GM18951 (cell line): ENCODE measurements at regions of chr17 and their contacts with region 1.

Region 1: DNA sequence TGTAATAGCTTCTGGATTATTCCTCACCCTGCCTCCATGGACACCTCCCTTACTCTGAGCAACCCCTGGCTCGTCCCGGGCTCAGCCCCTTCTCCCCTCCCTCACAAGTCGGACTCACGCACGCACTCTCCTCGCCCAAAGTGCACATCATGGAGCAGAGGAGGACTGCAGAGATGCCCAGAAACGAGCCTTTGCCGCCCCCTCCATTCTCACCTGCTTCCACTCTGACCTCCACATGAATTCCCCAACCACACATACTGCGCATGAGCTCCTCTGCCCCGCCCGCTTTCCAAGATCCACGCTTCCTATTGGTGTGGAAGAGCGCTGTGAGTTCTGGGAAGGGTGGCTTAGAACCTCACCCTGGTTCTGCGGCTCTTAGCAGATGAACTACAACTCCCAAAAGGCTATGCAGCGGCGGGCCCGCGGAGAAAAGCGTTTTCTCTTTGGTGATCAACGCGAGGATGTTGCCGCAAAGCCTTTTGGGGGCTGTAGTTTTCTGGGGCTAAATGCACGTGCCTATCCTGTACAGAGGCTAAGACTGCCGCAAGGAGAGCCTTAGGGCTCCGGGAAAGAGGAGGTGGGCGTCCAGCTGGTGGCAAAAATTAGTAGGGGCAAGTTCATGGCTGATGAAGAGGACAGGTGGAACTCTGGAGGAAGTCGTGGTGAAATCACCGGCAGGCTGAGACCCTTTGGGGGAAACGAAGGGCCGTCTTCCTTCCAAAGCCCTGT is at the start of gene PHB1:
- POLR2A ChIP-seq: peak; percentile 79

Region 2: GRCh38 chr17:49260011-49260921 is 154.5 kb before region 1 on chr17:
- in situ Hi-C with region 1: no loop called
- POLR2A ChIP-seq: no peak

Region 3: DNA sequence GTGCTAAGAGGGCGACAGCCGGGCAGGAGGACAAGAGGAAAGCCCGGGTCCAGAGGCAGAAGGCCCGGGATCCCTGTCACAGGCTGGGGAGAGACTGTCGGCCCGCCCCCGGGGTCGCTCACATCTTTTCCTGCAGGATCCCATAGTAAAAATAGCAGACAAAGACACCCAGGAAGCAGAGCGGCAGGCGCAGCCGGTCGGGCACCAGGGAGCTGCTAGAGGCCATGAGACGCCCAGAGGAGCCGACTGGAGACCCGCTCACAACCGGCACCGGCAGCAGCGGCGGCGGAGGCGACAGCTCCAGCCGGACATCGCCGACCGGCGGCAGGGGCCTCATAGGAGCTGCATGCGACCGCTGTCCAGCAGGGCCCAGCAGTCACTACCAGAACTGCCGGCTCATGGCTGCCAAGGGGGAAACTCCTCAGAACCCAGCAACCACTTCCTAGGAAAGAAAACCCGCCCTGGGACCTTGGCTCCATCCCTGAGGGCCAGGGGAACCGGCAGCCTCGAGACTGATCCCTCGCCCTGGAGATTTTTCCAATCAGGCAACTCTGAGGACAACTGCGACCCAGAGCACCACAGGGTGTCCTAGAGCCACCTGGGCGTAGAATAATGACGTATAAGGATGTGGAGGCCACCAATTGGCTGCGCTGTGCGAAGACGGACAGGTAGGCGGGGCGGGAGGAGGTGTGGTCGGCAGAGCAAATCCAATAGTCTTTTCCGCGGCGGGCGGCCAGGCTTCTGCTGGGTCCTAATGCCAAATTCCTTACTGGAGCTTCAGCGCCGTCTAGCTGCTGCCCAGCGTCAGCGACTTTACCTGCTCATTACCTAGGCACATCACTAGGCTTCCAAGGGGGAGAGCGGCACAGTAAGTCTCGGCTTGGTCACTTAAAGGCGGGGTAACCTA is 293.1 kb after region 1 on chr17 and contains the start of gene SLC35B1:
- in situ Hi-C with region 1: loop called (anchors 25 kb)
- POLR2A ChIP-seq: peak; percentile 78